PC-9 (cell line): ENCODE measurements at regions of chr5 and their contacts with region 1.

Region 1: GRCh38 chr5:169583424-169584204 is at the start of gene SPDL1:
- DNase-seq: peak; percentile 87 to 96
- H3K4me3 ChIP-seq: peak within 1 kb of the TSS; percentile 95
- H3K27ac ChIP-seq: peak within 1 kb of the TSS; percentile 60
- H3K4me1 ChIP-seq: peaks cover 14% of the 10 kb centered on the region
- H3K27me3 ChIP-seq: no peaks in the 10 kb centered on the region
- CTCF ChIP-seq: no peak
- total RNA-seq, gene SPDL1: 30.5 and 39.2 TPM in 2 replicates

Region 2: GRCh38 chr5:168579488-168580226 is 1004.0 kb before region 1 on chr5:
- CTCF ChIA-PET with region 1: no interaction called
- POLR2A ChIA-PET with region 1: no interaction called
- intact Hi-C with region 1: loop called (anchors 1 kb)
- DNase-seq: peak; percentile 97 to 99
- H3K4me3 ChIP-seq: peak overlapping the region; percentile 99
- H3K27ac ChIP-seq: peak overlapping the region; percentile 80
- H3K4me1 ChIP-seq: peaks cover 26% of the 10 kb centered on the region
- H3K27me3 ChIP-seq: no peaks in the 10 kb centered on the region
- CTCF ChIP-seq: no peak

Region 3: GRCh38 chr5:168679515-168679920 is 904.1 kb before region 1 on chr5:
- CTCF ChIA-PET with region 1: no interaction called
- POLR2A ChIA-PET with region 1: no interaction called
- intact Hi-C with region 1: loop called (anchors 5 kb)
- DNase-seq: peak in 1 of 2 experiments; percentile 63
- H3K4me3 ChIP-seq: no peak overlapping the region
- H3K27ac ChIP-seq: no peak overlapping the region
- H3K4me1 ChIP-seq: no peaks in the 10 kb centered on the region
- H3K27me3 ChIP-seq: peaks cover 22% of the 10 kb centered on the region; the same call in 1 of the 2 replicates
- CTCF ChIP-seq: peak; percentile 95

Region 4: GRCh38 chr5:168987543-168988300 is 595.9 kb before region 1 on chr5:
- CTCF ChIA-PET with region 1: interaction called, 7 read pairs
- POLR2A ChIA-PET with region 1: no interaction called
- intact Hi-C with region 1: loop called (anchors 1 kb)
- DNase-seq: peak; percentile 44 to 61
- H3K4me3 ChIP-seq: no peak overlapping the region
- H3K27ac ChIP-seq: no peak overlapping the region
- H3K4me1 ChIP-seq: no peaks in the 10 kb centered on the region
- H3K27me3 ChIP-seq: peaks cover 65% of the 10 kb centered on the region
- CTCF ChIP-seq: peak; percentile 89

Region 5: GRCh38 chr5:169052207-169052606 is 531.4 kb before region 1 on chr5:
- CTCF ChIA-PET with region 1: no interaction called
- POLR2A ChIA-PET with region 1: no interaction called
- intact Hi-C with region 1: no loop called
- DNase-seq: no peak
- H3K4me3 ChIP-seq: no peak overlapping the region
- H3K27ac ChIP-seq: no peak overlapping the region
- H3K4me1 ChIP-seq: no peaks in the 10 kb centered on the region
- H3K27me3 ChIP-seq: peaks cover 98% of the 10 kb centered on the region
- CTCF ChIP-seq: no peak

Region 6: GRCh38 chr5:169302491-169303118 is 281.0 kb before region 1 on chr5:
- CTCF ChIA-PET with region 1: no interaction called
- POLR2A ChIA-PET with region 1: no interaction called
- intact Hi-C with region 1: loop called (anchors 1 kb)
- DNase-seq: peak; percentile 42 to 56
- H3K4me3 ChIP-seq: no peak overlapping the region
- H3K27ac ChIP-seq: no peak overlapping the region
- H3K4me1 ChIP-seq: no peaks in the 10 kb centered on the region
- H3K27me3 ChIP-seq: 0 out of 2 replicates have a peak, but pooled peaks cover 10% of the 10 kb centered on the region
- CTCF ChIP-seq: peak; percentile 92

Region 7: DNA sequence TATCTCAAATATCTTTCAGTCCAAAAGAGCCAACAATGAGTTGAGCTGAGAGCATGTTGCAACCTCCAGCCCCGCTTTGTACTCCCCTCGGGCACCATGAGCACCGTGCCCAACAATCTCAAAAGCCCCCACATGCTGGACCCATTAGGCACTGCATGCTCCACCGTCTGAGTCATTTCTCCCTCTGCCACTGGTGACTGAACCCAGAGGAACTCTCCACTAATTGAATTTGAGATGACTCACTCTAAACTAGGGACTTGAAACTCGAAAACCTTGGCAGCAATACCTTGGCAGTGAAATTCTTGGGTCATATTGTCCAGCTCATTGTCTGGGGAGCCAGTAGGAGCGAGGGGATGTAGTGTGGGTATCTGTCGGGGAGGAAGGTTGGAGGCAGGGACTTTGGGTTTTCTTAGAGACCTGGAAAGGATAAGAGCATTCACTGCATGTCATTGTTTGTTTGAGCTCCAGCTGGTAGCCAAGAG is 232.8 kb before region 1 on chr5:
- CTCF ChIA-PET with region 1: no interaction called
- POLR2A ChIA-PET with region 1: no interaction called
- intact Hi-C with region 1: loop called (anchors 10 kb)
- DNase-seq: peak; percentile 86 to 98
- H3K4me3 ChIP-seq: no peak overlapping the region
- H3K27ac ChIP-seq: peak overlapping the region; percentile 98
- H3K4me1 ChIP-seq: peaks cover 66% of the 10 kb centered on the region
- H3K27me3 ChIP-seq: no peaks in the 10 kb centered on the region
- CTCF ChIP-seq: no peak

Region 8: GRCh38 chr5:169511708-169512107 is 71.9 kb before region 1 on chr5:
- CTCF ChIA-PET with region 1: no interaction called
- POLR2A ChIA-PET with region 1: no interaction called
- intact Hi-C with region 1: no loop called
- DNase-seq: no peak
- H3K4me3 ChIP-seq: no peak overlapping the region
- H3K27ac ChIP-seq: no peak overlapping the region
- H3K4me1 ChIP-seq: no peaks in the 10 kb centered on the region
- H3K27me3 ChIP-seq: peaks cover 4% of the 10 kb centered on the region; the same call in 1 of the 2 replicates
- CTCF ChIP-seq: no peak

Region 9: GRCh38 chr5:169980418-169981053 is 396.9 kb after region 1 on chr5 and contains the start of gene INSYN2B:
- CTCF ChIA-PET with region 1: interaction called, 6 read pairs
- POLR2A ChIA-PET with region 1: no interaction called
- intact Hi-C with region 1: loop called (anchors 5 kb)
- DNase-seq: peak; percentile 66 to 73
- H3K4me3 ChIP-seq: peak within 1 kb of the TSS; percentile 56
- H3K27ac ChIP-seq: peak within 1 kb of the TSS; percentile 27
- H3K4me1 ChIP-seq: peaks cover 41% of the 10 kb centered on the region
- H3K27me3 ChIP-seq: no peaks in the 10 kb centered on the region
- CTCF ChIP-seq: peak; percentile 86
- total RNA-seq, gene INSYN2B: 0.13 TPM in 1 of 2 replicates, not detected in the other